Esophagus squamous epithelium (tissue), 5 donors: ENCODE measurements at regions of chr1 and their contacts with region 1.

Region 1: DNA sequence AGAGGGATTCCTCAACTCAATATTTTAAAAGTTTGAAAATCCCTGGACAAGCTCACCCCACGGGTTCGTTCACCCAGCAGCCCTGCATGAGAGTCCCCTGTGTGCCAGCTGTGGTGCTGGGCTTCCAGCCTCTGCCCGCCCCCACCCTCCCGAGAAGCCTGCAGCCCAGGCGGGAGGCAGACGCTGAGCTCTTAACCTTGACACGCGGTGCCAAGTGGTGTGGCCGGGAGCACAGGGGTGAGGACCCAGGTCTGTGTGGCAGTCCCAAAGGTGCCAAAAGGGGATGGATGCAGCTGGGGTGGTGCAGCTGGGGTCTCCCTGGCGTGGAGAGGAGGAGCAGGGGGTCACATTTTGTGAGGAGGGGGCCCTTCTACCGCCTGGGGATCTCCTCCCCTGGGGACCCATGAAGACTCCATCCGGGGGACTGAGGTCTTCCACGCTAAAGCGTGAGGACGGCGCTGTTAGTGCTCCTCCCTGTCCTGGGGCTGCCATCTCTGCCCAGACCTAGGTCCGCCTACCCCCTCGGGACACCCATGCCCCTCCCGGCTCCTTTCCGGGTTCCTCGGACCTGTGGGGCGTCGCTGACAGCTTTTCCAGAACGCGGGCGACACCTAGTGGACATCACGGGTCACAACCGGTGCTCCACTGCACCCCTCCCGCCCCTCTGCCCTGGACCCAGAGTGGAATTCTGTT is 12.9 kb downstream of the PLA2G2F start:
- DNase-seq: no peak
- H3K4me3 ChIP-seq: peak overlapping the region in 3 of 4 donors; percentile 34 to 64 (median 44)
- H3K27ac ChIP-seq: peak overlapping the region in 3 of 4 donors; percentile 2 to 64 (median 43)
- H3K4me1 ChIP-seq: peaks cover 9 to 26% (median 10%) of the 10 kb centered on the region in 3 donors
- H3K27me3 ChIP-seq: peaks cover 0 to 14% (median 0%) of the 10 kb centered on the region in 4 donors
- CTCF ChIP-seq: peak; percentile 88 to 96 (median 90)
- POLR2A ChIP-seq: no peak

Region 2: GRCh38 chr1:19811206-19811851 is 340.7 kb before region 1 on chr1:
- intact Hi-C with region 1: no loop called
- DNase-seq: no peak
- H3K4me3 ChIP-seq: no peak overlapping the region
- H3K27ac ChIP-seq: no peak overlapping the region
- H3K4me1 ChIP-seq: peaks cover 0 to 5% (median 0%) of the 10 kb centered on the region in 3 donors
- H3K27me3 ChIP-seq: peaks cover 0 to 7% (median 0%) of the 10 kb centered on the region in 4 donors
- CTCF ChIP-seq: peak in 5 of 6 experiments; percentile 17 to 57 (median 41)
- POLR2A ChIP-seq: no peak

Region 3: DNA sequence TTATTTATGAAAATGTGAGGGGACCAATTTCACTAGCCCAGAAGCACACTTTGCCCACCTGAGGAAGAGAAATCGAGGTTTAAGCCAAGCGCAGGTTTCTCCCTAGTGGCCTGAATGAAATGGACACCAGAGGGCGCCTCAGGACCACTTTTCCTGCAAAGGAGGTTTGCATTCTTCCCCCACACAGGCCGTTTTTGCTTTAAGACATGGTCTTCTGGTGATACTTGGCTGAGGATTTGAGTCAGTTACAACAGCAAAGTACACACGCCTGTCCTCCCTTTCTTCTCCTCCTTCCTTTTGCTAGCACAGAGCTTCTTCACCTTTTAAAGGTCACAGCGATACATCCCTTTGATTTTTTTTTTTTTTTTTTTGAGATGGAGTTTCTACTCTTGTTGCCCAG is 234.0 kb before region 1 on chr1:
- intact Hi-C with region 1: loop called (anchors 5 kb)
- DNase-seq: no peak
- H3K4me3 ChIP-seq: no peak overlapping the region
- H3K27ac ChIP-seq: no peak overlapping the region
- H3K4me1 ChIP-seq: no peaks in the 10 kb centered on the region
- H3K27me3 ChIP-seq: peaks cover 0 to 9% (median 0%) of the 10 kb centered on the region in 4 donors
- CTCF ChIP-seq: peak; percentile 85 to 95 (median 88)
- POLR2A ChIP-seq: no peak

Region 4: GRCh38 chr1:20095564-20096434 is 56.3 kb before region 1 on chr1:
- intact Hi-C with region 1: loop called (anchors 5 kb)
- DNase-seq: no peak
- H3K4me3 ChIP-seq: no peak overlapping the region
- H3K27ac ChIP-seq: peak overlapping the region in 2 of 4 donors; percentile 61 to 66
- H3K4me1 ChIP-seq: peaks cover 0 to 14% (median 11%) of the 10 kb centered on the region in 3 donors
- H3K27me3 ChIP-seq: peaks cover 0 to 8% (median 0%) of the 10 kb centered on the region in 4 donors
- CTCF ChIP-seq: no peak
- POLR2A ChIP-seq: no peak

Region 5: DNA sequence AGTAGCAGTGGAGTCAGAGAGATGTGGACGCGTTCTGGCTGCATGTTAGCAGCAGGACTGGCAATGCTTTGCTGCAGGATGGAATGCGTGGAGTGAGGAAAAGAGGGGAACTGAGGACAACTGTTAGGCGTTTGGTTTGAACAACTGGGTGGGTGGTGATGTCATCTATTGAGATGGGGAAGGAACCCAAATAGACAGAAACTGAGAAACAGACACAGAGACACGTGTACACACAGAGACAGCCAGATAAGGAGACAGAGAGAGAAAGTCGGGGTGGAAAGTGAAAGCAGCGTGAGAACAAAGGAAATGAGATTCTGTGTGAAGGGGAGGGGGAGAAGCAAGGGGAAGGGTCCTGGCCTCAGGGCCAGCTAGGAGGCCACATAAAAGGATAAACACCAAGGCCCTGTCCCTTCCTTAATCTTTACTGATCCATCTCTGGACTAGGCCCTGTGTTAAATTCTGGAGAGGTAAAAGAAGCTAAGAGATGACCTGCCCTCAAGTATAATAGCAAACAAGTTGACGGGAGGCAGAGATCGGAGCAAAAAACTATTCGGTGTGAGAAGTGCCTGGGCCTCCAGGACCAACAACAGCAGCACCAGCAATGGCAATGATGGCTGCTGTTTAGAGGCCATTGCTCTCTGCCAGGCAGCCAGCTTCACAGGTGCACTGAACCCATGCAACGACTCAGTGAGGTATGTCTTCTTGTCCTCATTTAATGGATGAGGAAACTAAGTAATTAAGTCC is 170.2 kb after region 1 on chr1:
- intact Hi-C with region 1: no loop called
- DNase-seq: no peak
- H3K4me3 ChIP-seq: no peak overlapping the region
- H3K27ac ChIP-seq: no peak overlapping the region
- H3K4me1 ChIP-seq: peaks cover 0 to 16% (median 0%) of the 10 kb centered on the region in 3 donors
- H3K27me3 ChIP-seq: peaks cover 0 to 61% (median 0%) of the 10 kb centered on the region in 4 donors
- CTCF ChIP-seq: no peak
- POLR2A ChIP-seq: no peak